RWPE1 (cell line): ENCODE measurements at regions of chrX and their contacts with region 1.

Region 1: DNA sequence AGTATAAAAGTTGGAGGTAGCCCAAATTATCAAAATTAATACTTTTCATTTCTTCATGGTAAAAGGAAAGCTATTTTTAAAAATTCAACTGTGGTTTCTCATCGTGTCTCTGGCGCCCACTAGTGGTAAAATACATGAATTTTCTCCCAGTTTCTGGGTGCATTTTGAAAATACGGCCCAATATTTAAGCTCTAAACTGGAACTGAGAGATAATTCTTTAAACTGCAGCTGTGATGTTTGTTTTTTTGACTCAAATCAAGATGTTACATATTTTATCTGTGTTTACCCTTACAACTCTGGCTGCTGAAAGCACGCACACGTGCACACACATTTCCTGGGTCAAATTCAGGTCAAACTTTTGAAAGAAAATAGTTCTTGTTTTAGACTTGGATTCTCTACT is 123.9 kb upstream of the ACSL4 start:
- DNase-seq: peak; percentile 21
- H3K27ac ChIP-seq: no peak overlapping the region
- CTCF ChIP-seq: peak; percentile 75

Region 2: DNA sequence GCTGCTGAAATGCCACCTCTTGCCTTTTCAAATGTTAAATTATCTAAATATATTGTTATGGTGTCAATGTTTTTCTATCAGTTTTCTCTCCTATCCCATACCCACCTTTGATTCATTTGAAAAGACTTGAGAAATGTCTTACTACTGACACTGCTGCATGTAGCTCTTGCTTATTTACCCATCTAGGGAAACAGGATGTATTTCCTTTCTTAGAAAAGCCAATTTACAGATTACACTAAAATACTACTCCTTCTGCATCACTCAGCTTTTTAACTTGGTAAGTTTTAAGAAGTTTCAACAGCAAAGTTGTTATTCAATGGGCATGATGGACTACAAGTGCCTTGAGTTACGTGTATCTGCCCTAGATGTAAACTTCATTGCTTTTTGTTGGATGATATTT is 218.8 kb before region 1 on chrX:
- CTCF ChIA-PET with region 1: no interaction called
- POLR2A ChIA-PET with region 1: no interaction called
- DNase-seq: no peak
- H3K27ac ChIP-seq: no peak overlapping the region
- CTCF ChIP-seq: no peak

Region 3: DNA sequence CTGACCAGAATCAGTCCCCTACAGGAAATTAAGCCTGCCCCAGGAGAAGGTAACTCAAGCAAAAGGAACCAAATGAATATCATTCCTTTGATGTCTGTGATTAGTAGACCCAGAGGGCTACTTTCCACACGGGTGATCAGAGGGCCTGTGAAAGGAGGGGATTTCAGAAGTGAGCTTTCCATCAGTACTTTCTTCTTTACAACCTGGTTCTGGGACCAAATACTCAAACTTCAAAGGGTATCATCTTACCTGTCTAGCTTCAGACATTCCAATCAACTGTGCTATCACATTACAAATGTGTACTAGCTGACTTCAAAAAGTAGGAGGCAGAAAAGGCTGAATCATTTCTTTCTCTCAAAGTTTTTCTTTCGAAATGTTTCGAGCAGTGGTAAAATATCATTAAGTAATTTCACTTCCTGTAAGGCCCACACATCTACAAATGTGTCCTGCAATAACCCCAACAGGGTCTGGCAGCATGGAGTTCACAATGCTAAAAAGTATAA is 147.8 kb before region 1 on chrX:
- CTCF ChIA-PET with region 1: interaction called, 15 read pairs
- POLR2A ChIA-PET with region 1: no interaction called
- DNase-seq: peak; percentile 9
- H3K27ac ChIP-seq: peak overlapping the region; percentile 70
- CTCF ChIP-seq: no peak

Region 4: GRCh38 chrX:109818976-109819375 is 38.0 kb before region 1 on chrX:
- CTCF ChIA-PET with region 1: no interaction called
- POLR2A ChIA-PET with region 1: no interaction called
- DNase-seq: no peak
- H3K27ac ChIP-seq: no peak overlapping the region
- CTCF ChIP-seq: no peak